AG04450 (cell line): ENCODE measurements at regions of chr20 and their contacts with region 1.

Region 1: DNA sequence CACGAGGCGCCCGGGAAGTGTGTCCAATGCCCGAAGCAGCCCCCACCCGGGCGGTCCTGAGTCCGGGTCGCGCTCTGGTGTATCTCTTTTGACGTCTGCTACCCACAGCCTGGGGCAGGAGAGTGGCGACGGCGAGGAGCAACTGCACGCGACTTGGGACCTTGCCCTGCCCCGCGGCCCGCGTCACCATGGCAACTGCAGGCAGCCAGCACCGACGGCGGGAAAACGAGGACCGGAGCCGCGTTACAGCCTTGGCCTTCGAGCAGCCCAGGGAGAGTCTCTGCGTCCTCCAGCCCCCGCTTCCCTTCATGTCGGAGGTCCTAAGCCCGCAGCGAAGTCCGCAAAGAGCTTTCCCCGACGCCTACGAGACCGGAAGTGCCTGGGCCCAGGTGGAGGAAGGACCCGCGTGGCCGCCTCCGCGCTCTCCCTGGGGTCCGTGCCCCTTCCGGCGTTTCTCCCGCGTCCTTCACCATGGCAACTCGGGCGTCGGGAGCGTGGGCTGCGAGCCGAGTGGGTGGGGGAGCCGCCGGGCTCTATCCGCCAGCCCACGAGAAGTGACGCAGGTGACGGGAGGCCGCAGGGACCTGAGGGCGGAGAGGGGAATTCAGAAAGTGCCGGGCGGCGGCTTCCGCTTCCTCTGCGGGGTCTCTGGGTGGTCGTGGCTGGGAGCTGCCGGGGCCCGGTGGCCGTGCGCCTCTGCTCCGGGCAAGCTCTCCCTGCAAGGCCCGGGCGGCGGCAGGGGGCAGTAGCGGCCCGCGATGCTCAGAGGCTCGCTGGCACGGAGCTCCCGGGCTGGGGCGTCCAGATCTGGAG is 88.6 kb upstream of the TGM3 start:
- DNase-seq: no peak
- H3K4me3 ChIP-seq: peak overlapping the region; percentile 57
- H3K27ac ChIP-seq: no peak overlapping the region
- H3K27me3 ChIP-seq: peaks cover 27% of the 10 kb centered on the region
- CTCF ChIP-seq: peak; percentile 62

Region 2: GRCh38 chr20:2217857-2218539 is 10.8 kb after region 1 on chr20:
- CTCF ChIA-PET with region 1: interaction called, 18 read pairs
- POLR2A ChIA-PET with region 1: no interaction called
- DNase-seq: no peak
- H3K4me3 ChIP-seq: no peak overlapping the region
- H3K27ac ChIP-seq: no peak overlapping the region
- H3K27me3 ChIP-seq: peaks cover 2% of the 10 kb centered on the region
- CTCF ChIP-seq: no peak

Region 3: DNA sequence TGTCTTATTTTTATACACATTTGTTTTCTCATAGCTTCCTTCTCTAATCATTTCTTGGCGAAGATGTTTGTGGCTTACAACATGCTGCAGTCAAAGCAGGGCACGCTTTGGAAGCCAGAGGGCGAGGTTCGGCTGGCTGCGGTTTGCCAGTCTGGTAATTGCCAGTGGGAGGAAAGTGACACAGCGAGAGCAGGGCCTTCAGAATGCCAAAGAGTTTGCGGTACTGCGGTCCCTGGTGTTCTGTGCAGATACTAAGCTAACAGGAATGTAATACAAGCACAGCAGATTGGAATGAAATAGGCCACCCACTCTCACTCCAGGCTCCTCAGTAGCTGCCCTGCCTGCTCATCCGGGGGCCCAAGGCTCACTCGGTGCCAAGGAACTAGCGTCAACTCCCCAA is 29.9 kb after region 1 on chr20:
- CTCF ChIA-PET with region 1: interaction called, 12 read pairs
- POLR2A ChIA-PET with region 1: no interaction called
- DNase-seq: peak; percentile 67
- H3K4me3 ChIP-seq: no peak overlapping the region
- H3K27ac ChIP-seq: peak overlapping the region; percentile 65
- H3K27me3 ChIP-seq: no peaks in the 10 kb centered on the region
- CTCF ChIP-seq: no peak

Region 4: GRCh38 chr20:2402271-2402980 is 195.3 kb after region 1 on chr20:
- CTCF ChIA-PET with region 1: interaction called, 11 read pairs
- POLR2A ChIA-PET with region 1: no interaction called
- DNase-seq: no peak
- H3K4me3 ChIP-seq: no peak overlapping the region
- H3K27ac ChIP-seq: no peak overlapping the region
- H3K27me3 ChIP-seq: no peaks in the 10 kb centered on the region
- CTCF ChIP-seq: peak; percentile 51

Region 5: GRCh38 chr20:2451939-2452732 is 245.0 kb after region 1 on chr20:
- CTCF ChIA-PET with region 1: interaction called, 26 read pairs
- POLR2A ChIA-PET with region 1: no interaction called
- DNase-seq: no peak
- H3K4me3 ChIP-seq: no peak overlapping the region
- H3K27ac ChIP-seq: no peak overlapping the region
- H3K27me3 ChIP-seq: no peaks in the 10 kb centered on the region
- CTCF ChIP-seq: peak; percentile 89